ENCODE measurements at regions of chr13 and their contacts with region 1.

Region 1: GRCh38 chr13:31909864-31910551 is 121.6 kb upstream of the FRY start:
- DNase-seq: peak; percentile 18
- H3K4me3 ChIP-seq: no peak overlapping the region; a peak in 1 of 4 replicates
- H3K27ac ChIP-seq: no peak overlapping the region
- H3K4me1 ChIP-seq: peaks cover 0 to 14% of the 10 kb centered on the region in 2 experiments; a peak in 2 of 4 replicates
- H3K27me3 ChIP-seq: no peaks in the 10 kb centered on the region
- CTCF ChIP-seq: peak; percentile 96
- EP300 ChIP-seq: no peak
- RAD21 ChIP-seq: peak; percentile 91

Region 2: DNA sequence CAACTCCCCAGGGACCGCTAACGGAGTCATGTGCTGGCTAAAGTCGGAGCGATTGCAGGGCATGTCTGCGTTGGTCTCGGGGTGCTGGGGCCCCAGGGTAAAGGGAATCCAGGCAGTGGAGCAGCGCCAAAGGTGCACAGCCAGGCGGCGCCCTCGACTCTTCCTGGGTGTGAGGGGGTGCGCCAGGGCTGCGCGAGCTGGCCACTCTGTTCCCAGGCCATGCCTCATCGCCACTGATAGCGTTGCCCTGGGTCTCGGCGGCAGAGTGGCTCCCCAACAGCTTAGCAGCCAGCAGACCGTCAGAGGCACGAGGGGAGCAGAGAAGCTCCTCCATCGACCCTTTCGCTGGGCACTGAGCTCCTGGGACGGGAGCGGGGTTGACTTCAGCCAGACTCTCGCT is 557.5 kb before region 1 on chr13:
- CTCF ChIA-PET with region 1: no interaction called
- POLR2A ChIA-PET with region 1: no interaction called
- DNase-seq: no peak
- H3K4me3 ChIP-seq: no peak overlapping the region
- H3K27ac ChIP-seq: no peak overlapping the region
- H3K4me1 ChIP-seq: no peaks in the 10 kb centered on the region
- H3K27me3 ChIP-seq: no peaks in the 10 kb centered on the region
- CTCF ChIP-seq: no peak
- EP300 ChIP-seq: no peak
- RAD21 ChIP-seq: no peak

Region 3: DNA sequence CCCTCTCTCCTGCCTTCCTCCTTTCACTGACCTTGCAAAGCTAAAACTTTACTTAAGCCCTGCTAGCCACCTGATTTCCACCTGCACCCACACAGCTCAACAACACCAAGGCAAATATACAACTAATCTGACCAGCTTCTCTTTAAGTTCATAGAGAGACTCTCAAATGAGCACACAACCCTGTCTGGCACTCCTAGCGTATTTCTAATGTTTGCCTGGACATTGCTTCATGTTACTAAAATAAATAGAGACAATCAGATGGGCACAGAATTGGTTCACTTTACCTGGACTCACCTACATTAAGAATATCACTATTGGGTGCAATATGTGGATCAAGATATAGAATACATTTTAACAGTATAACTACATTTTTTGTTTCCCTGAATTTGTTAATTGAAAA is 203.9 kb before region 1 on chr13:
- CTCF ChIA-PET with region 1: no interaction called
- POLR2A ChIA-PET with region 1: no interaction called
- DNase-seq: no peak
- H3K4me3 ChIP-seq: no peak overlapping the region
- H3K27ac ChIP-seq: no peak overlapping the region
- H3K4me1 ChIP-seq: peaks cover 0 to 2% of the 10 kb centered on the region in 2 experiments; a peak in 1 of 4 replicates
- H3K27me3 ChIP-seq: no peaks in the 10 kb centered on the region; the same call in 1 of the 2 replicates
- CTCF ChIP-seq: no peak
- EP300 ChIP-seq: no peak
- RAD21 ChIP-seq: no peak

Region 4: GRCh38 chr13:31775686-31776085 is 134.3 kb before region 1 on chr13:
- CTCF ChIA-PET with region 1: no interaction called
- POLR2A ChIA-PET with region 1: no interaction called
- DNase-seq: no peak
- H3K4me3 ChIP-seq: no peak overlapping the region
- H3K27ac ChIP-seq: no peak overlapping the region
- H3K4me1 ChIP-seq: peaks cover 0 to 7% of the 10 kb centered on the region in 2 experiments; a peak in 2 of 4 replicates
- H3K27me3 ChIP-seq: no peaks in the 10 kb centered on the region
- CTCF ChIP-seq: no peak
- EP300 ChIP-seq: no peak
- RAD21 ChIP-seq: no peak

Region 5: DNA sequence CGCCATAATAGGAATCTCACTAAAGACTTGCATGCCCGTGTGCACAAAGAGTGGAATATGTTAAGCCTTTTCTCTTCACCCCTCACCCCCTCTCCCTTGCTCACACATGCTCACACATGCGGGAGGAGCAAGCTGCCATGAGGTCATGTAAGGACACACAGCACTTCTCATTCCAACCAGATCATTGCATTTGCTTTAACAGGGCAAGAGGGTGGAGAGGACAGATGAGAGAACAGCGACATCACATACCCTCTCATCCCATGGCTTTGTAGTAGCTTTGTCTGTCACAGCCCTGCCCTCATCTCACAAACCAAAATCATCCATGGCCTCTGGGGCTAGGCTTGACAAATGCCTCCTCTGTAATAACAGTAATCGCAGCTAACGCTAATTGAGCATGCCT is 24.0 kb before region 1 on chr13:
- CTCF ChIA-PET with region 1: interaction called, 11 read pairs
- POLR2A ChIA-PET with region 1: no interaction called
- DNase-seq: peak; percentile 29
- H3K4me3 ChIP-seq: no peak overlapping the region
- H3K27ac ChIP-seq: no peak overlapping the region; a peak in 1 of 4 replicates
- H3K4me1 ChIP-seq: peaks cover 10 to 19% of the 10 kb centered on the region in 2 experiments; a peak in 3 of 4 replicates
- H3K27me3 ChIP-seq: no peaks in the 10 kb centered on the region
- CTCF ChIP-seq: no peak
- EP300 ChIP-seq: no peak
- RAD21 ChIP-seq: no peak

Region 6: GRCh38 chr13:31919971-31920726 is 10.1 kb after region 1 on chr13:
- CTCF ChIA-PET with region 1: interaction called, 39 read pairs
- POLR2A ChIA-PET with region 1: no interaction called
- DNase-seq: no peak
- H3K4me3 ChIP-seq: no peak overlapping the region
- H3K27ac ChIP-seq: no peak overlapping the region
- H3K4me1 ChIP-seq: no peaks in the 10 kb centered on the region; a peak in 1 of 4 replicates
- H3K27me3 ChIP-seq: no peaks in the 10 kb centered on the region
- CTCF ChIP-seq: no peak
- EP300 ChIP-seq: no peak
- RAD21 ChIP-seq: no peak

Region 7: GRCh38 chr13:31987535-31988170 is 77.6 kb after region 1 on chr13:
- CTCF ChIA-PET with region 1: interaction called, 11 read pairs
- POLR2A ChIA-PET with region 1: no interaction called
- DNase-seq: no peak
- H3K4me3 ChIP-seq: no peak overlapping the region
- H3K27ac ChIP-seq: no peak overlapping the region
- H3K4me1 ChIP-seq: peaks cover 0 to 11% of the 10 kb centered on the region in 2 experiments; a peak in 2 of 4 replicates
- H3K27me3 ChIP-seq: no peaks in the 10 kb centered on the region
- CTCF ChIP-seq: no peak
- EP300 ChIP-seq: no peak
- RAD21 ChIP-seq: no peak

Region 8: DNA sequence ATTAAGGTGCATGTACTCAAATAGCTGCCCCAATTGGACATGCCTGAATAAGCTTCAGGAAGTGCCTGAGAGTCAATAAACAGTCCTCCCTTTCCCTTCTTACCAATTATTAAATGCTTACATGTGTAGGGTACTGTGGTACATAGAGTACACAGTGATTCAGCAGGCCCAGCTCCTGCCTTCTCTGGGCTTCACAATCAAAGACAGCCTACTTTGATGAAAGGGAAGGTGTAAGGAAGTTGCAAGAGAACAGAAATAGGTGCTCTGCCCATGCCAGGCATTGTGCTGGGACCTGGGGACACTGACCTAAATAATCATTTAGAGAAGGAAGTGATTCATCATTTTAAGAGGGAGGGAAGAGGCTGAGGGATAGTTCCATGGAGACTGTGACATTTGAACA is 138.8 kb after region 1 on chr13:
- CTCF ChIA-PET with region 1: interaction called, 10 read pairs
- POLR2A ChIA-PET with region 1: no interaction called
- DNase-seq: peak; percentile 21
- H3K4me3 ChIP-seq: no peak overlapping the region
- H3K27ac ChIP-seq: peak overlapping the region in 1 of 2 experiments; percentile 58; a peak in 2 of 4 replicates
- H3K4me1 ChIP-seq: peaks cover 13% of the 10 kb centered on the region in 2 experiments; a peak in 2 of 4 replicates
- H3K27me3 ChIP-seq: no peaks in the 10 kb centered on the region
- CTCF ChIP-seq: no peak
- EP300 ChIP-seq: no peak
- RAD21 ChIP-seq: no peak

Region 9: GRCh38 chr13:32305646-32306045 is 395.6 kb after region 1 on chr13:
- CTCF ChIA-PET with region 1: interaction called, 13 read pairs
- POLR2A ChIA-PET with region 1: no interaction called
- DNase-seq: no peak
- H3K4me3 ChIP-seq: no peak overlapping the region
- H3K27ac ChIP-seq: no peak overlapping the region
- H3K4me1 ChIP-seq: no peaks in the 10 kb centered on the region; a peak in 1 of 4 replicates
- H3K27me3 ChIP-seq: no peaks in the 10 kb centered on the region
- CTCF ChIP-seq: no peak
- EP300 ChIP-seq: no peak
- RAD21 ChIP-seq: no peak

Region 10: GRCh38 chr13:32581177-32581786 is 671.3 kb after region 1 on chr13:
- CTCF ChIA-PET with region 1: interaction called, 46 read pairs
- POLR2A ChIA-PET with region 1: no interaction called
- DNase-seq: no peak
- H3K4me3 ChIP-seq: no peak overlapping the region
- H3K27ac ChIP-seq: no peak overlapping the region
- H3K4me1 ChIP-seq: peaks cover 4% of the 10 kb centered on the region in 2 experiments; a peak in 3 of 4 replicates
- H3K27me3 ChIP-seq: no peaks in the 10 kb centered on the region
- CTCF ChIP-seq: peak; percentile 79
- EP300 ChIP-seq: no peak
- RAD21 ChIP-seq: peak; percentile 67